ENCODE measurements at regions of chr15 and their contacts with region 1.

Region 1: GRCh38 chr15:35697549-35698299 is 151.8 kb upstream of the DPH6 start:
- DNase-seq: peak in 2 of 5 donors; percentile 33 to 36
- ATAC-seq: peak; percentile 65 to 86 (median 76)
- H3K4me3 ChIP-seq: no peak overlapping the region
- H3K27ac ChIP-seq: peak overlapping the region; percentile 19 to 68 (median 44)
- H3K4me1 ChIP-seq: peaks cover 0 to 46% (median 33%) of the 10 kb centered on the region in 12 donors
- H3K27me3 ChIP-seq: no peaks in the 10 kb centered on the region
- CTCF ChIP-seq: peak in 4 of 12 donors; percentile 13 to 37 (median 24)
- POLR2A ChIP-seq: no peak

Region 2: GRCh38 chr15:35545824-35546510 is 151.8 kb before region 1 on chr15 and contains the start of gene DPH6:
- intact Hi-C with region 1: loop called in 5 of 10 experiments (anchors 5 to 10 kb)
- DNase-seq: peak; percentile 85 to 93 (median 90)
- ATAC-seq: peak; percentile 92 to 96 (median 95)
- H3K4me3 ChIP-seq: peak within 1 kb of the TSS; percentile 62 to 97 (median 80)
- H3K27ac ChIP-seq: peak within 1 kb of the TSS; percentile 96 to 100 (median 99)
- H3K4me1 ChIP-seq: peaks cover 0 to 25% (median 16%) of the 10 kb centered on the region in 12 donors
- H3K27me3 ChIP-seq: no peaks in the 10 kb centered on the region
- CTCF ChIP-seq: peak in 5 of 12 donors; percentile 10 to 32 (median 18)
- POLR2A ChIP-seq: peak in 1 of 2 donors; percentile 85
- total RNA-seq, gene DPH6: 7.7 to 24.8 (median 16.0) TPM

Region 3: GRCh38 chr15:35648941-35649340 is 48.8 kb before region 1 on chr15:
- intact Hi-C with region 1: loop called in 1 of 10 experiments (anchors 5 kb)
- DNase-seq: no peak
- ATAC-seq: no peak
- H3K4me3 ChIP-seq: no peak overlapping the region
- H3K27ac ChIP-seq: no peak overlapping the region
- H3K4me1 ChIP-seq: no peaks in the 10 kb centered on the region
- H3K27me3 ChIP-seq: no peaks in the 10 kb centered on the region
- CTCF ChIP-seq: no peak
- POLR2A ChIP-seq: no peak

Region 4: DNA sequence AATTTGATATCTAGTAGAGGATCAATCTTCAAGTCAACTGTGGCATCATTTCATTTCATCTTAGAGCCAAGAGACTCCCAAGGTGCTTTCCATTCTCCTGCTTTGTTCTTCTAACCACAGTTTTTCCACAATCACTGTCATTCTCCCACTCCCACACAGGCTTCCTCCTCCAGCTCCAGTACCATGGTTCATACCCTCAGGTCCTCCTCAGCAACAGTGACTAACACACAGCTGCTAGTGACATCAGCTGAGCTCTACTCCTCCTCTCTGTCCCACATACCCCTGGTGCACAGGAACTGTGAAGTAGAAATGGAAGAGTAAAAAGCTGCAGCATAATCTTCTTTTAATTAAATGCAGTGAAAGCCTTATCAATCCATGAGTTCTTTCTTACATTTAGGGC is 48.4 kb after region 1 on chr15:
- intact Hi-C with region 1: loop called in 2 of 10 experiments (anchors 2 to 5 kb)
- DNase-seq: no peak
- ATAC-seq: peak in 1 of 4 donors; percentile 58
- H3K4me3 ChIP-seq: no peak overlapping the region
- H3K27ac ChIP-seq: no peak overlapping the region
- H3K4me1 ChIP-seq: no peaks in the 10 kb centered on the region
- H3K27me3 ChIP-seq: no peaks in the 10 kb centered on the region
- CTCF ChIP-seq: no peak
- POLR2A ChIP-seq: no peak

Region 5: DNA sequence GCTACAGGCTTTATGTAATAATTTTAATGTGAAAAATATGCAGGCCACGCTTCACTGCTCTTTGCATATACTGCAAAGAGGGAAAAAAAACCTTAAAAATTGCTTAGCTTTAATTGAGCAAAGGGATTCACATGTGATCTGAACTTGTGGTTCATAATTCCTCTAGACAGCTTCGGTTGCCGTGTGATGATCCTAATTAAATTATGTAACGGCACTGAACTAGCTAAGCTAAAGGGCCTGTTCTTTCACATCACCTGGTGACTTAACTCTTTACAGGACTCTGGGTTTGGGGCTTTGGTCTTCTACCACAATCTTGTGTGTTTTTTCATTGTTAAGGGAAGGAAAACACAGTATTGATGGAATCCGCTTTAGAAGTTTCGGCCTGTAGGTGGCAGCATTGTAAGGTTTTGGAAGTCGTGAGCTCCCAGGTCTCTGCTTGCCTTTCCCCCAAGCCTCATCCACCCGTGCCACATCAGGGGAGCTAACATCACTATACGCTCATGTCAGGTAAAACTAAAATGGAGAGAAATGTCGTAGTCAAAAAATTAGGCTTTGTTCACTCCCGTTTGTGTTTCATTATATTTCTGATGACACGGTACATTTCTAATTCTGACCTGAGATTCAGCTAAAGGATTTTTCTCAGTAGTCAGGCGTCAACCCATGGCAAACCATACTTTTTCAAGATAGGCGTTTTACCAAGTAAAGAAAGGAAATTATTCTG is 53.8 kb after region 1 on chr15:
- intact Hi-C with region 1: loop called in 2 of 10 experiments (anchors 2 to 5 kb)
- DNase-seq: peak in 4 of 5 donors; percentile 66 to 80 (median 72)
- ATAC-seq: peak; percentile 79 to 91 (median 86)
- H3K4me3 ChIP-seq: peak overlapping the region in 2 of 12 donors; percentile 6 to 13
- H3K27ac ChIP-seq: no peak overlapping the region
- H3K4me1 ChIP-seq: peaks cover 0 to 21% (median 0%) of the 10 kb centered on the region in 12 donors
- H3K27me3 ChIP-seq: no peaks in the 10 kb centered on the region
- CTCF ChIP-seq: peak; percentile 57 to 84 (median 78)
- POLR2A ChIP-seq: no peak